Activated CD8-positive, alpha-beta T cell treated with anti-CD3 and anti-CD28 coated beads for 36 hours (primary cell): ENCODE measurements at regions of chr6 and their contacts with region 1.

Region 1: DNA sequence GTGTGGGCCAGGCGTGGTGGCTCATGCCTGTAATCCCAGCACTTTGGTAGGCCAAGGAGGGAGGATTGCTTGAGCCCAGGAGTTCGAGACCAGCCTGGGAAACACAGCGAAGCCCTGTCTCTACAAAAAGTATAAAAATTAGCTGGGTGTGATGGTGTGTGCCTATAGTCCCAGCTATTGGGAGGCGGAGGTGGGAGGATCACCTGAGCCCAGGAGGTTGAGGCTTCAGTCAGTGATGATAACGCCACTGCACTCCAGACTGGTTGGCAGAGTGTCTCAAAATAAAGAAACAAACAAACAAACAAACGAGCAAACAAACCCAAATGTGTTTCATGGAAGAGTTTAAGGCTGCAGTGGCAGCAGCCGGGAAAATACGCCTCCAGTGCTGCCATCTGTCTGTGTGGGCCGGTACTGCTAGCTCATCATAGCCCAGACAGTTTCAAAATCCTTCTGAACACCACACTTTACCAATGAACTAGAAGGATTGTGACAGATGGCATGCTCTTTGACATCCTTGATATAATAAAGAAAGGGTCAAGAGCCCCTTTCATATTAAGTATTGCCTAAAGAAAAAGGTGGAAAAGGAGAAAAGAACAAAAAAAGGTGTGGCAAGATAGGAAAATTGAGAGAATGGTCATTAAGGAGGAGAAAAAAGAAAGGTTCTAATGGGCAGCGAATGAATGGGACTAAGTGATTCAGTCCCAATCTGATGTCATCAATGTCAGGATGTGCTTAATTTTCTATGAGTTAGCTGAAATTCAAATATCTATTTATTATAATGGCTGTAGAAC is 298.6 kb downstream of the SYNE1 start:
- DNase-seq: peak; percentile 69
- ATAC-seq: peak; percentile 95
- H3K4me3 Mint-ChIP-seq: no peak overlapping the region
- H3K27ac Mint-ChIP-seq: no peak overlapping the region
- H3K4me1 Mint-ChIP-seq: peaks cover 2% of the 10 kb centered on the region
- H3K27me3 Mint-ChIP-seq: no peaks in the 10 kb centered on the region
- CTCF ChIP-seq: peak; percentile 84

Region 2: GRCh38 chr6:152049502-152049901 is 289.0 kb before region 1 on chr6:
- CTCF ChIA-PET with region 1: no interaction called
- POLR2A ChIA-PET with region 1: no interaction called
- intact Hi-C with region 1: no loop called
- DNase-seq: no peak
- ATAC-seq: no peak
- H3K4me3 Mint-ChIP-seq: no peak overlapping the region
- H3K27ac Mint-ChIP-seq: no peak overlapping the region
- H3K4me1 Mint-ChIP-seq: no peaks in the 10 kb centered on the region
- H3K27me3 Mint-ChIP-seq: no peaks in the 10 kb centered on the region
- CTCF ChIP-seq: no peak

Region 3: DNA sequence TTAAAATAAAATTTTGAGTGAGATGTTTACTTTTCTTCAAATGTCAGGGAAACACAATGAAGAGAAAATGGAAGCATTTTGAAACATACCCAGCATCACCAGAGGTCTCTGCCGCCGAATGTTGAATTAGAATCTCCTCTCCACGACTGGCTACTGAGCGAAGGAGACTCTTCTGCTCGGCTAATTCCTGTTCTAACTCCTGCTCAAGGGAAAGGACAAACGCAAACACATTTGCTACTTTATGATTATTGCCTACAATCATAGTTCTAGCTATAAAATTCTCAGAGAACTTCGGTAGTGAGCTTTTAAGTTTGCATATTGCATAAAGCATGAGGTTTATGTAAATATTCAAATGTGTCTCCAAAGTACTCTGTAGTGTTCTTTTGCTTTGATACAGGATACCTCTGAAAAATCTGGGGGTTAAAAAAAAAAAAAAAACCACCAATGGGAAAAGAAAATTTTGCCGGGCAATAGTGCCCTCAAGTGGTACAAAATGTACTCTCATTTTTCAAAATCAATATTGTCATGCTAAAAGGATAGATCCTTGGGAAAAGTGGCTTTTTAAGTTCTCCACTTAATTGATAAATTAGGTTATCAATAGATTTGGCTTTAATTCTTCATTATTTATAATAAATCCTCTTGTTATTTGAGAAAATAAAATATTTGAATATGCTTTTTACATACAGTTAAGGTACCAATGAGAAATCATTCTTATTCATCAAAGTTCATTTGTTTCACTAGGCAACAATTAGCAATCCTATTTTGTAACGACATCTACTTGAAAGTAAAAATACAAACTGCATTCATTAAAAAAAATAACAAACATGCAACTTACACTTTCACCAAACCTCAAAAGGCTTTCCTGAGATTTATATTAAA is 70.3 kb before region 1 on chr6:
- CTCF ChIA-PET with region 1: interaction called, 10 read pairs
- POLR2A ChIA-PET with region 1: no interaction called
- intact Hi-C with region 1: no loop called
- DNase-seq: peak; percentile 50
- ATAC-seq: no peak
- H3K4me3 Mint-ChIP-seq: no peak overlapping the region
- H3K27ac Mint-ChIP-seq: no peak overlapping the region
- H3K4me1 Mint-ChIP-seq: peaks cover 9% of the 10 kb centered on the region
- H3K27me3 Mint-ChIP-seq: no peaks in the 10 kb centered on the region
- CTCF ChIP-seq: peak; percentile 72

Region 4: GRCh38 chr6:152301764-152302568 is 36.6 kb before region 1 on chr6:
- CTCF ChIA-PET with region 1: interaction called, 93 read pairs
- POLR2A ChIA-PET with region 1: interaction called, 5 read pairs
- intact Hi-C with region 1: loop called (anchors 5 kb)
- DNase-seq: peak; percentile 95
- ATAC-seq: peak; percentile 94
- H3K4me3 Mint-ChIP-seq: peak overlapping the region; percentile 97
- H3K27ac Mint-ChIP-seq: peak overlapping the region; percentile 99
- H3K4me1 Mint-ChIP-seq: peaks cover 30% of the 10 kb centered on the region
- H3K27me3 Mint-ChIP-seq: no peaks in the 10 kb centered on the region
- CTCF ChIP-seq: peak; percentile 59

Region 5: DNA sequence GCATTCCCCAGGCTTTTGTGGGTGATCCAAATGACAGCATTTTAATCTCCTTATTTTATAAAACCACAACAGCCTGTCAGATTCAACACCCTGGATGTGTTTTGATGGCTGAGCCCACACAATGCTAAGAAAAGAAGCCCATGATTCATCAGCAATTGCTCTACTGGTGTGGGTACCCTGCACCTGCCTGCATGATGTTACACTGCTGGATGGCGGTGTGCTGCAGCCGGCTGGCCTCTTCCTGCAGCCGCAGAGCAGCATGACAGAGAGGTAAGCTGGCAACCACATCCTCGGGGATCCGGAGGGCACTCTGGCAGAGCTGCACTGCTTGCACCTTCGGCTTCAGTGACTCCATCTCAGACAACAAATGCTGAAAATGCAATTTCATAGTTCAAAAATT is 28.9 kb before region 1 on chr6:
- CTCF ChIA-PET with region 1: interaction called, 45 read pairs
- POLR2A ChIA-PET with region 1: no interaction called
- intact Hi-C with region 1: loop called (anchors 5 kb)
- DNase-seq: peak; percentile 87
- ATAC-seq: peak; percentile 98
- H3K4me3 Mint-ChIP-seq: no peak overlapping the region
- H3K27ac Mint-ChIP-seq: no peak overlapping the region
- H3K4me1 Mint-ChIP-seq: peaks cover 25% of the 10 kb centered on the region
- H3K27me3 Mint-ChIP-seq: no peaks in the 10 kb centered on the region
- CTCF ChIP-seq: no peak

Region 6: GRCh38 chr6:152316024-152316423 is 22.5 kb before region 1 on chr6:
- CTCF ChIA-PET with region 1: interaction called, 45 read pairs
- POLR2A ChIA-PET with region 1: no interaction called
- intact Hi-C with region 1: no loop called
- DNase-seq: no peak
- ATAC-seq: no peak
- H3K4me3 Mint-ChIP-seq: no peak overlapping the region
- H3K27ac Mint-ChIP-seq: no peak overlapping the region
- H3K4me1 Mint-ChIP-seq: peaks cover 4% of the 10 kb centered on the region
- H3K27me3 Mint-ChIP-seq: no peaks in the 10 kb centered on the region
- CTCF ChIP-seq: no peak

Region 7: DNA sequence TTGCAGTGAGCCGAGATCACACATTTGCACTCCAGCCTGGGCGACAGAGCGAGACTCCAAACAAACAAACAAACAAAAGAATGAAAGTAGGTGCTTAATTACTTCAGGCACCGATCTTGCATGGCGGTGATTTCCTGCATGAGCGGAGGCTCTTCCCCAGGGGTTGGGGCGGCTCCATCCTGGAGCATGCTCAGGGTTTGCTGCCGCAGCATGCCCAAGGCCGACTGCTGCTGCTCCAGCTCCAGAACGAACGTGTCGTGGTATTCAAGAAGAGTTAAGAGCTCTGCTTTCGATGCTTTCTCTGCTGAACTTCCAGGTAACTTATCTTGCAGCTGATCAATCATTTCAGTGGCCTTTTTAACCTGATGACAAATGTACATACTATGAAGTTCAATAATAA is 15.2 kb before region 1 on chr6:
- CTCF ChIA-PET with region 1: interaction called, 45 read pairs
- POLR2A ChIA-PET with region 1: interaction called, 3 read pairs
- intact Hi-C with region 1: no loop called
- DNase-seq: no peak
- ATAC-seq: no peak
- H3K4me3 Mint-ChIP-seq: no peak overlapping the region
- H3K27ac Mint-ChIP-seq: no peak overlapping the region
- H3K4me1 Mint-ChIP-seq: no peaks in the 10 kb centered on the region
- H3K27me3 Mint-ChIP-seq: no peaks in the 10 kb centered on the region
- CTCF ChIP-seq: no peak

Region 8: DNA sequence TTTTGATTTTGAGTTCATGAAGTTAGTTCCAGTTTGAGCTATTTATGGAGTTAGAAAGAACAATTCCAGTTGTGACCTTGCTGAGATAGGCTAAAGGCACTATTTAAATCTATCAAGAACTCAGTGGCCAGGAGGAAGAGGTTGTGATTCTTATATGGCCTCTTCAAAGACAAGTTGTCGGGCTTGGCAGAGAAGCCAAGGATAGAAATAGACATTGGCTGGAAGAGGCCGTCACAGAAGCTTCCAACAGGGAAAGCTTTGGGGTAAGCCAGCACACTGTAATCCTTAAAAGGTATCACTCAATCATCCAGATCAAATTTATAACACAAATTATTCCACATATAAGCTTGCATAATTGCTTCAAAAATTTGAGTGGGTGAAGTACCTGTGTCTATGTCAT is 12.6 kb after region 1 on chr6:
- CTCF ChIA-PET with region 1: interaction called, 25 read pairs
- POLR2A ChIA-PET with region 1: no interaction called
- intact Hi-C with region 1: no loop called
- DNase-seq: no peak
- ATAC-seq: no peak
- H3K4me3 Mint-ChIP-seq: no peak overlapping the region
- H3K27ac Mint-ChIP-seq: no peak overlapping the region
- H3K4me1 Mint-ChIP-seq: peaks cover 2% of the 10 kb centered on the region
- H3K27me3 Mint-ChIP-seq: peaks cover 1% of the 10 kb centered on the region
- CTCF ChIP-seq: no peak

Region 9: GRCh38 chr6:152651986-152652385 is 313.5 kb after region 1 on chr6:
- CTCF ChIA-PET with region 1: no interaction called
- POLR2A ChIA-PET with region 1: no interaction called
- intact Hi-C with region 1: no loop called
- DNase-seq: no peak
- ATAC-seq: no peak
- H3K4me3 Mint-ChIP-seq: no peak overlapping the region
- H3K27ac Mint-ChIP-seq: no peak overlapping the region
- H3K4me1 Mint-ChIP-seq: no peaks in the 10 kb centered on the region
- H3K27me3 Mint-ChIP-seq: peaks cover 16% of the 10 kb centered on the region
- CTCF ChIP-seq: no peak